ENCODE measurements at regions of chr3 and their contacts with region 1.

Region 1: GRCh38 chr3:39809181-39809994 is at the start of gene MYRIP:
- DNase-seq: peak; percentile 74
- ATAC-seq: peak; percentile 94 to 95
- total RNA-seq, gene MYRIP: 2.3 to 6.8 TPM

Region 2: GRCh38 chr3:40191850-40192448 is 382.6 kb after region 1 on chr3:
- intact Hi-C with region 1: loop called in 1 of 2 experiments (anchors 10 kb)
- DNase-seq: peak; percentile 51
- ATAC-seq: peak; percentile 64